ENCODE measurements at regions of chr10 and their contacts with region 1.

Region 1: DNA sequence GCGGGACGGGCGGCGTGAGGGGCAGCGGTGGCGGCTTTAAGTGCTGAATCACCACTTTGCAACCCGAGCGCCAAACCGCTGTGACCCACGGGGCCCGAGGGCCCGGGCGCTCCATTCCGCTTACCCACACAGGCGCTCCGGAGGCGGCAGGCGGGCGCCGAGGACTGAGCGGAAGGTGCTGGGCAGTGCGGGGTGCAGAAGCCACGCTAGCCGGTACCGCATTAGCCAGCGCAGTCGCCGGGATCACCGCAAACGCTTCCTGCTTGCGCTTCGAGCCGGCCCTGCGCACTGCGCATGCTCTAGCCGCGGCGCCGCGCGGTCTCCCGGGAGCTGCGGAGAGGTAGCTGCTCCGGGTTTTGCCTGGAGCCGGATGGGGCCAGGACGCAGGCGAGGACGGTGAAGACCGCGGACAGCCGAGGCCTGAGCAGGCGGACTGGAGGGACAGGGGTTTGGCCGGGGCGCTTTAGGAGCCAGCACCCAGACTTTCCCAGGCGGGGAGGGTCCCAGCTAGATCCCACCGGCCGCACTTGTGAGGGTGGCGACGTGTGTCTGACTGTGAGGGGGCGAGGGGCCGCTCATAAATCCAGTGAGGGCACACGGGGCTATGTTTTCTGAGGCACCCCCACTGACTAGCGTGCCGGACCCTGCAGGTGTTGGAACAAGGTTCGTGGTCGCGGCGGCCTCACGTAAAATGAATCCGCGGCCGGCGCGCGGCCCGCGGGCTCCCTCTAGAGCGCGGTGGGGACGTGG is at the start of gene IDE:
- DNase-seq: peak; percentile 92 to 93 (median 93)
- ATAC-seq: peak; percentile 91 to 93 (median 92)
- H3K4me3 ChIP-seq: peak within 1 kb of the TSS; percentile 76 to 96 (median 93)
- H3K27ac ChIP-seq: peak within 1 kb of the TSS; percentile 82 to 87 (median 84)
- H3K4me1 ChIP-seq: peaks cover 0 to 15% (median 7%) of the 10 kb centered on the region in 4 donors
- H3K27me3 ChIP-seq: no peaks in the 10 kb centered on the region
- CTCF ChIP-seq: peak; percentile 73 to 81 (median 77)
- POLR2A ChIP-seq: peak; percentile 73
- total RNA-seq, gene IDE: 25.6 to 31.4 (median 29.2) TPM

Region 2: GRCh38 chr10:92517034-92517655 is 56.8 kb before region 1 on chr10:
- intact Hi-C with region 1: loop called (anchors 5 kb)
- DNase-seq: peak in 1 of 3 donors; percentile 62
- ATAC-seq: peak; percentile 94 to 97 (median 96)
- H3K4me3 ChIP-seq: no peak overlapping the region
- H3K27ac ChIP-seq: no peak overlapping the region
- H3K4me1 ChIP-seq: no peaks in the 10 kb centered on the region
- H3K27me3 ChIP-seq: no peaks in the 10 kb centered on the region
- CTCF ChIP-seq: peak; percentile 83 to 86 (median 84)
- POLR2A ChIP-seq: no peak

Measured in right lobe of liver (tissue), 6 donors.